OCI-LY7 (cell line): ENCODE measurements at regions of chr7 and their contacts with region 1.

Region 1: DNA sequence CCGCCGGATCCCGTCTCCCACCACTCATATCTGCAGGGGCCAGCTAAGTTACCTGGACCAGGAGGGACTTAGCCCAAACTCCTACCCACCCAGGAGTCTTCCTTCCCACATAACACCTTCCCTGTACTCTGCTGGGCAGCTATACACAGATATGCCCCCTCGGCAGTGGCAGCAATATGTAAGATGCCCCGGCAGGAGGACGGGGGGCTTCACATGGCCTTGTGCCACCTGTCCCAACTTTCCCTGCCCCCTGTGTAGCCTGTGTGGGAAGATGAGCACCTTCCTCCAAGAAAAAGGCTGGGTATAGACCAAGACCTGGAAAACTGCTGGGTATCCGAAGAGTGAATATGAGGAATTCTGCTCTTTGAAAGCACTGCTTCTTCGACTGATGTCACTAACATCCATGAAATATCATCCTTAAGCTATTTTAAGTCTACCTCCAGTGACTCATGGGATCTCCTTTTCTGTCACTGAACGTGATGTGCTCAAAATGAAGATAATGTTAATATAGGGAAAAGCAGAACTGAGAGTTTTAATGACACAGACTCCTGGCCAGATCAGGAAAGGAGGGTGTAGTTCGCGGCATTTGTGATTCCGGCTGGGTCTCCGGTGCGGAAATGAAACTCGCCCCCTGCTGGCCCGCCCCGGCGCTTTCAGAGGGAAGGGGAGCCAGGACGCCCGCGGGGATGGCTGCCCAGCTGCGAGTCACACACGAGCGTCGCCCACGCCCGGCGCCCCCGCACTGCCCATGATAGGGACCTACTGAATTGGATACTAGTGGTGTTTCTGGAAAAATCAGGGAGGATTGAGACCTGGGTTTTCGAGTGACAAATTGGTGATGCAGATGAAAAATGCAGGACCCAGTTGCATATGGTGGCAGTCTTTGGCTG is 256.9 kb upstream of the NFE2L3 start:
- DNase-seq: peak; percentile 70
- H3K4me3 ChIP-seq: peak overlapping the region; percentile 15
- H3K27ac ChIP-seq: peak overlapping the region; percentile 19
- H3K4me1 ChIP-seq: peaks cover 35% of the 10 kb centered on the region
- CTCF ChIP-seq: peak; percentile 81

Region 2: DNA sequence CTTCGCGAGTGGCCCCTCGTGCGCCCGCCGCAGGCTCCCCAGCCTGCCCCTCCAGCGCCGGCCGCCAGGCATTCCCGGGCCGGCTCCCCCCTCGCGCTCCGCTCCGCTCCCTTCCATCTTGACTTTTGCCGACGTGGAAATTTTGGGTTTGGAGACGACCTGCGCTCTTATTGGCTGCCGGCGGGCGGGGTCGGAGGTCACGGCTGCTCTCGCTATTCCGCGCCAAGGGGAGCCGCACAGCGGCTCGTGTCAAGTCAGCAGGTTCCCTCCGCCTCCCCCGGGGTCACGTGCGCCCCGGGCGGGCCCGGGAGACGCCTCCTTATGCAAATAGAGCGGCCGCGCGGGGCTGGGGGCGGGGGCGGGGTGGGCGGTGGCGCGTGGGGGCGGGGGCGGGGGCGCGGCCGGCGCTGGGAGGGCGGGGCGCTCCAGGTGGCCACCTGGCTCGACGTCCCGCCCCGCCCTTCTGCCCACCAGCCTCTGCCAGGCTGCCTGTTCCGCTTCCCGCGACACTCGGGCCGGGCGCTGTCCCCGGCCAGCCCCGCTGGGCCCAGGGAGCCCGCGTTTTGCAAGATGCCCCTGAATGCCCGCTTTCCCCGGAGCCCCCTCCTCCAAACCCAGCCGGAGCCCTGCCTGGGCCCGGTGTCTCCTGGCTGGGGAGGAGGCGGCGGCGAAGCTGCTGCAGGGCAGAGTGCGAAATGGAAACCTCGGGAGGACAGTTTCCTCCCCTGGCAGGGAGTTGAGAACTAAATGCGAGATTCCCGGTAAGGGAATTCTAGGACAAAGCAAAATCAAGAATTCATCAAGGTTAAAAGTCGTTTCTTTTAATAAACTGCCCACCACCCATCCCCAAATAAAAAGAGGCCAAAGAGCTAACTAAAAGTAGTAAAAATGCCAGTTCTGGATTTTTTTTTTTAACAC is 56.1 kb after region 1 on chr7:
- CTCF ChIA-PET with region 1: no interaction called
- POLR2A ChIA-PET with region 1: no interaction called
- intact Hi-C with region 1: loop called (anchors 2 kb)
- DNase-seq: peak; percentile 97
- H3K4me3 ChIP-seq: peak overlapping the region; percentile 76
- H3K27ac ChIP-seq: peak overlapping the region; percentile 28
- H3K4me1 ChIP-seq: peaks cover 61% of the 10 kb centered on the region
- CTCF ChIP-seq: no peak

Region 3: GRCh38 chr7:26090927-26091519 is 195.9 kb after region 1 on chr7:
- CTCF ChIA-PET with region 1: no interaction called
- POLR2A ChIA-PET with region 1: no interaction called
- intact Hi-C with region 1: no loop called
- DNase-seq: peak; percentile 76
- H3K4me3 ChIP-seq: peak overlapping the region; percentile 9
- H3K27ac ChIP-seq: no peak overlapping the region
- H3K4me1 ChIP-seq: peaks cover 15% of the 10 kb centered on the region
- CTCF ChIP-seq: peak; percentile 98

Region 4: DNA sequence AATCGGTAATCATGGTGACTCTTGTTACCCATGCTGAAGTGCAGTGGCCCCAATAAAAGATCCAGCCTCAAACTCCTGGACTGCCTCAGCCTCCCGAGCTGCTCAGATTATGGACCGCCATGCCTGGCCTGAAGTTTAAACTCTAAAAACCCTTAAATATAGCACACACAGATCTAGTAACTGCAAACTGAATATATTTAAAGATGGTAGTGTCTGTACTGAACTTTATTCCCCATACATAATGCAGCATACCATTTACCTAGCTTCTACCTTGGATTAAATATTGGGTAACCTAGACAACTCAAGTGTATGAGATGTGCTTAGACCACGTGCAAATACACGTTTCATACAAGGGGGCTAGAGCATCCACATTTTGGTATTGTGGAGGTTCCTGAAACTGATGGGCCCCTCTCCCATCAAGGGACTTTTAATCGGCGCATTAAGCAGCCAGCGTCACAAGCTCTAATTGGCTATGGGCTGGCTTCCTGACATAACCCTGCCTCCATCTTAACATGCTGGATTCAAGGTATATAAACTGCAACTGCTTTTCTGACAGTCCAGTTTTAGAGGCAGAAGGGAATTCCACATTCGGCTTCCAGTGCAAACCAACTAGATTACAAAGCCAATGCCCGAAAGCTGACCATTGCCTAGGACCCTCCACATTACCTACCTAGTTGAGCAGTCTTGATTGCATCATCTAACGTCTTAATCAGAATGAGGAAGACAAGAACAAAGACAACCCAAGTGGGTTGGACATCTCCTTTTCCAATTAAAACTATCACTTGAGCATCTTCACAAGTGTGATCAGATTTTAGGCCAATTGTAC is 292.4 kb after region 1 on chr7:
- CTCF ChIA-PET with region 1: no interaction called
- POLR2A ChIA-PET with region 1: interaction called, 3 read pairs
- intact Hi-C with region 1: loop called (anchors 5 kb)
- DNase-seq: peak; percentile 43
- H3K4me3 ChIP-seq: no peak overlapping the region
- H3K27ac ChIP-seq: peak overlapping the region; percentile 60
- H3K4me1 ChIP-seq: peaks cover 26% of the 10 kb centered on the region
- CTCF ChIP-seq: no peak

Region 5: DNA sequence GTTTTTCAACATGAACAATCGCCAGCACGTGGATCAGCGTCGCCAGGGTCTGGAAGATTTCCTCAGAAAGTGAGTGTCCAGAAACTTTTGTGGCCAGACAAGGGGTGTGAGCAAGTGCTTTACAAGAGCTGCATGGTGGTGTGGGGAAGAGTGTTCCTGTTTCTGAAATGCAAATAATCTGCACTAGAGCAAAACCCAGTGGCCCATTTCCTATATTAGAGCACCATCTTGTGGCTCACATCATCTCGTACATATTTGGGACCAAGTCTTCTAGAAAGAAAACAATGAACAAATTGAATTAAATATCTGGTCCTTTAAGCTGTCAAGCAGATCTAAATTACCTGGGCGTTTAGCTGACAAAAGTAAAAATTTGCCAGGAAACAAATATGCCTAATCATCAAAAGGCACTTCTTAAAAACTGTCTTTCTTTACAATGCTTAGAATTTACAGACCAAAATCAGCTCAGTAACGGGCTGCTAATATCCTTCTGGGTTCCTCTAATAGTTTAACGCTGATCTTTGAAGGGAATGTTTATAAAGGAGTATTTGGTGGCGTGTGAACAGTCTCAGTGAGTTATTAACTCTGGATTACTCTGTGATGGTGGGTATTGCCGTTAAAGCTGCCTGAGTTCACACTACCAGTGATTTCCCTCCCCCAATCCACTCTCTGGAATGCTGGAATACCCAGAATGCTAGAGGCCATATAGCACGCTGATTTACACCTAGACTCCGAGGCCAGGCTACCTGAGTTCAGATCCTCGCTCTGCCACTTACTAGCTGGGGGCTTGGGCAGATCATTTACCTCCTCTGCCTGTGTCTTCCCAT is 470.1 kb after region 1 on chr7:
- CTCF ChIA-PET with region 1: interaction called, 5 read pairs
- POLR2A ChIA-PET with region 1: interaction called, 3 read pairs
- intact Hi-C with region 1: loop called (anchors 1 kb)
- DNase-seq: peak; percentile 89
- H3K4me3 ChIP-seq: no peak overlapping the region
- H3K27ac ChIP-seq: peak overlapping the region; percentile 29
- H3K4me1 ChIP-seq: peaks cover 21% of the 10 kb centered on the region
- CTCF ChIP-seq: peak; percentile 93

Region 6: DNA sequence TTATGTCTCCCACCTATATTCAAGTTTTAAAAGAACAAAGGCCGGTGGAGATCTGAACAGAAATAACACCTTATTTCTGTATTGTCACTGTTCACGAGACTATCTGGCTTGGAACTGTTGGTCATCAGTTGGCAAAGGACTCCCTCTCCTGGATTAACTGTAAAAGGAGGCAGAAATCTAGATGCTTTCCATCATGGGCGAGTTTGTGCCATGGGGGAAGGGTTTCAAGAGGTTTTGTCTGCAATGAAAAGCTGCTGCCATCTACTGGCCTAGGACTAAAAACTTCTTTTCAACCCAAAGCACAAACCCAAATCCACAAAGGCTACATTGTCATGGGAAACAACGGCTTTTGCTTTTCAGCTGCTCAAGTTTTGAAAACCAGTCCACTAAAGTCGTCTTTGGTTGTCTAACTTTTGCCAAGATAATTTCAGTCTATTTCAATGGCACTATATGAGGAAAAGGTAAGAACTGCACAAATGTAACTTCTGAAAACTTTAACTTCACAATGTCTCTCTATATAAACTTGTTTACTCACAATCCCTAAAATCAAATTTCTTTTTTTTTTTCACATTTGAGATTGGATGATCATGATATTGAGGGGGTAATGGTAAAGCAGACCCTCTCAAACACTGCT is 772.5 kb after region 1 on chr7:
- CTCF ChIA-PET with region 1: no interaction called
- POLR2A ChIA-PET with region 1: no interaction called
- intact Hi-C with region 1: loop called (anchors 2 kb)
- DNase-seq: peak; percentile 85
- H3K4me3 ChIP-seq: no peak overlapping the region
- H3K27ac ChIP-seq: no peak overlapping the region
- H3K4me1 ChIP-seq: no peaks in the 10 kb centered on the region
- CTCF ChIP-seq: peak; percentile 96